ENCODE measurements at regions of chr6 and their contacts with region 1.

Region 1: DNA sequence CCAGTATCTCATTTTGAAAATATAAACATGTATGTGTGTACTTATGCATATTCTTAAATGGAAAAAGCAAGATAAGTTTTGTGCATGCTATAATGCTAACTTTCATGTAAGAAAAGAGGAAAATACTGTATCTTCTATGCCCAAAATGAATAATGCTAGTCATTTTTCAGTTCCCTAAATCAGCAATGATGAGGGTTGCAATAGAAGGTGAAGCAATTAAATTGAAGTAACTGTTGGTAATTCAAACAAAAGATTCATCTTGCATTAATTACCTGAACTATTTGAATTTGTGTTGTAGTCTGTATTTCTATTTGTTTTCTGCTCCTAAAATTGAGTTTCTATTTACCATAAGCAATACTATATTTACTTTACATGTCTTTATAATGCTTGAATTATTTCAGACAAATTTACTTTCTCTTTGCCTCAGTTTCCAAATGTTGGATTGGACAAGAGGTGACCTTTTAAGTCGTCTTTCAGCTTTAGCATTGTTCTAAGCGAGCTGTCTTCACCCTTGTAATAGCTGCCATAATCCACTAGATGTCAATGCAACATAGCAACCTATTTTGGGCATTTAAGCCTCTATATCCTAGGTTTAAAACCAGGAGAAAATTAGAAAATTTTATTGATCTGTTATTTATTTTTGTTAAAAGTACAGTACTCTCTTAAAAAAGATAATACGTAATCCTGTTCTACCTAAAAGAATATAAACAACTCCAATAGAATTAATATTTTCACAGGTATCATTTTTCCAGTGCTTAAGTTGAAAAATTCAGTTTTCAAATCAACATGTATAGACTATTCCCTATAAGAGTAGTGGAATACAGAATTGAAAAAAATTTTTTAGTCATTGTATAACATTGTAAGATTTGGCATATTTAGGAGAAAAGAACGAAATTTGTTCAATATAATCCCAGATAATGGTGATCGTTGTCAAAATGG is 52.3 kb upstream of the IFNGR1 start:
- DNase-seq: no peak
- ATAC-seq: peak; percentile 72

Region 2: GRCh38 chr6:137641474-137642077 is 370.1 kb after region 1 on chr6:
- intact Hi-C with region 1: loop called in 1 of 2 experiments (anchors 5 kb)
- DNase-seq: peak; percentile 61 to 79
- ATAC-seq: peak; percentile 99